Activated CD4-positive, alpha-beta T cell treated with anti-CD3 and anti-CD28 coated beads for 36 hours (primary cell): ENCODE measurements at regions of chr11 and their contacts with region 1.

Region 1: DNA sequence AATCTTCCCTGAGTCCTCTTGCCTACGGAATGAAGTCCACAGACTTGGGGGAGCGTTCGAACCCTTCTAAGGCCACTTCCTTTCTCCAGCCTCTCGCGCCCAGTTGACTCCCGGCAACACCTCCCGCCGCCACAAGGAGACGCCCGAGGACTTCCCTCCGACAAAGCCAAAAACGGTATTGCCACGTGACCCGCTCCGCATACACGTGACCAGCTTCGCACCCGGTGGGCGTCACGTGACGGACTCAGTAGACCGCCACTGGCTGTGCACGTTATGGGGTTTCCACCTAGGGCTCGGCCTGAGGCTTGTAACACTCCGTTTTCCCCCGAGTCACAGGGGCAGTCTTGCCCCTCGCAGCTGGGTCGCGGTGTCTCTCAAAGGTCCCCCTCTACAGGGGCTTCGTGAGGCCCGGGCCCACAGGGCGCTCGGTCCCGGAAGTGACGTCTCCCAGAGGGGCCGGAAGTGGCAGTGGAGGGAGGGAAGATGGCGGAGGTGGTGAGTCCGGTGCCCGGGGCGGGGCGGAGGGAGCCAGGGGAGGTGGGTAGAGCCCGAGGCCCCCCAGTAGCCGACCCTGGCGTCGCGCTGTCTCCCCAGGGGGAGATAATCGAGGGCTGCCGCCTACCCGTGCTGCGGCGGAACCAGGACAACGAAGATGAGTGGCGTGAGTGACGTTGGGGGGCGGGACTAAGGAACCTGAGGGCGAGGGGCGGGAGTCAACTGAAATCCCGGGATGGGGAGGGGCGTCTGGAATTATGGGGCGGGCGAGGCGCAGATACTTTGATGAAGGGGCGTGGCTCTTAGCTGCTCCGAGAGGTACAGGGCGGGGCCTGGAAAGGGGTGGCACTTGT is at the start of gene KAT5:
- DNase-seq: peak; percentile 99
- ATAC-seq: peak; percentile 86
- H3K4me3 Mint-ChIP-seq: peak within 1 kb of the TSS; percentile 90
- H3K27ac Mint-ChIP-seq: peak within 1 kb of the TSS; percentile 96
- H3K4me1 Mint-ChIP-seq: peaks cover 27% of the 10 kb centered on the region
- H3K27me3 Mint-ChIP-seq: no peaks in the 10 kb centered on the region
- total RNA-seq, gene KAT5: 56.5 to 65.1 TPM

Region 2: GRCh38 chr11:65652511-65653231 is 59.3 kb before region 1 on chr11:
- CTCF ChIA-PET with region 1: interaction called, 3 read pairs
- POLR2A ChIA-PET with region 1: no interaction called
- intact Hi-C with region 1: loop called in 1 of 2 experiments (anchors 1 kb)
- DNase-seq: peak; percentile 98
- ATAC-seq: peak; percentile 89
- H3K4me3 Mint-ChIP-seq: peak overlapping the region; percentile 79
- H3K27ac Mint-ChIP-seq: peak overlapping the region; percentile 95
- H3K4me1 Mint-ChIP-seq: peaks cover 45% of the 10 kb centered on the region
- H3K27me3 Mint-ChIP-seq: no peaks in the 10 kb centered on the region

Region 3: DNA sequence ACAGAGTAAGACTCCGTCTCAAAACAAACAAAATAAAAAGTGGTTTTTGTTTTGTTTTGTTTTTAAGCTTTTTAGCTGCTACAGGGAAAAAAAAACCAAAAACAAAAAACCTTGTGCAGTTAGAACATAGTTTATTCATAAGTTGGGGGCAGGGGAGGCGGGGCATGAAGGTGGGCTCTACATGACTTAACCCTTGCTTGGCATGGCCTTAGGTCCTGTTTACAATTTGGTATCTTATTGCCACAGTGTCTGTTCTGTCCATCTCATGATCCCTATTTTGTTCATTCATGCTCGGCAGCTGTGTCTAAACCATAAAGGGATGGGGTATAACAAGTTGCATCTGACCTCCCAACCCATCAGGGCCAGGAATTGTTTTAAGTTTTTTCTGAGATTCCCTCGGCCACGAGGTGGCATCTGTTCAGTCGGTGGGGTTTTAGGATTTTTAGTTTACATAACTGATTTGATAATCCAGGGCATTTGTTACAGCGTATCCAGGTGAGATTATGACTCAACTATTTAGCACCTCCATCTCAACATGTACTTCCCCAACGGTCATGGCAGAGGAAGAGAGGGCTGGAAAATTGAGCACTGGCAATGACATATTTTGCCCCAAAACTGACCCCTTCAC is 61.9 kb after region 1 on chr11:
- CTCF ChIA-PET with region 1: interaction called, 31 read pairs
- POLR2A ChIA-PET with region 1: interaction called, 3 read pairs
- intact Hi-C with region 1: loop called (anchors 1 to 2 kb)
- DNase-seq: no peak
- ATAC-seq: peak; percentile 23
- H3K4me3 Mint-ChIP-seq: no peak overlapping the region
- H3K27ac Mint-ChIP-seq: peak overlapping the region; percentile 15
- H3K4me1 Mint-ChIP-seq: peaks cover 26% of the 10 kb centered on the region
- H3K27me3 Mint-ChIP-seq: no peaks in the 10 kb centered on the region

Region 4: DNA sequence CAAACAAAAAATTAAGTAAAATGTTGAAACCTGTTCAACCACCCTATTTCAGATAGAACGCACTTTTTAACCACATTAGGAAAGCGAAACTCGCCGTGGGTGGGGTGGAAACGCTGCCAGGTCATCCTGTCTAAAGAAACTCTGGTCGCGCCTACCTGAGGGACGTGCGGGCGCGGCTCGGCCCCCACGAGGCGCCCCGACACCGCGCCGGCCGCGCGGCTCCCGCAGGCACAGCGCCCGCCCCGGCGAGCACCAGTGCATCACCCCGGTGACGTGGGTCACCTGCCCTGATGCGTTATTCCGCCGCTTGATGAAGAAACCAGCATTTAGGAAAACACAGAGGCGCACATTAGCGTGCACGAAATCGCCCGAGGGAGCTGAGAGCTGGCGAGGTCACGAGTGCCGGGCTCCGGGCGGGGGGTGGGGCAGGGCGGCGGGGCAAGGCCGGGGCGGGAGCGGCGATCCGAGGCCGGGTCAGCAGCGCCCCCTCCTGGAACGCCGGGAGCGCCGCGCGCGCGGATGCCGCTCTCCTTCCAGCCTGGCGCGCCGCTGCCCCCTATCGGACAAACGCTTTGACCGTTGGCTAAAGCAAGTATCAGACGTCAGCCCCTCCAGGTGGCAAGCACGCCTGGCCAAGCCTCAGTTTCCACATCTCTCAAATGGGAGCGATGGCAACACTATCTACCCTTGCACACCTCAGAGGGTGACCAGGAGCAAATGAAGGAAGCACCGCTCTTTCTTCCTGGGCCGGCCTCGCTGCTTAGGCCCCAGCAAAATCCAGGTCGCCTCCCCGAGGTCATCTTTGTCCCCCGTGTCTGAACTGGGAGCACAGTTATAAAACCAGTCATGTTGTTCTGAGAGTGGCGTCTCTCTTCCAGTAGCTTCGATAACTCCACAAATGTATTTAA is 106.1 kb after region 1 on chr11:
- CTCF ChIA-PET with region 1: interaction called, 21 read pairs
- POLR2A ChIA-PET with region 1: no interaction called
- intact Hi-C with region 1: loop called (anchors 1 kb)
- DNase-seq: peak; percentile 98
- ATAC-seq: peak; percentile 91
- H3K4me3 Mint-ChIP-seq: peak overlapping the region; percentile 74
- H3K27ac Mint-ChIP-seq: peak overlapping the region; percentile 87
- H3K4me1 Mint-ChIP-seq: peaks cover 14% of the 10 kb centered on the region
- H3K27me3 Mint-ChIP-seq: no peaks in the 10 kb centered on the region

Region 5: DNA sequence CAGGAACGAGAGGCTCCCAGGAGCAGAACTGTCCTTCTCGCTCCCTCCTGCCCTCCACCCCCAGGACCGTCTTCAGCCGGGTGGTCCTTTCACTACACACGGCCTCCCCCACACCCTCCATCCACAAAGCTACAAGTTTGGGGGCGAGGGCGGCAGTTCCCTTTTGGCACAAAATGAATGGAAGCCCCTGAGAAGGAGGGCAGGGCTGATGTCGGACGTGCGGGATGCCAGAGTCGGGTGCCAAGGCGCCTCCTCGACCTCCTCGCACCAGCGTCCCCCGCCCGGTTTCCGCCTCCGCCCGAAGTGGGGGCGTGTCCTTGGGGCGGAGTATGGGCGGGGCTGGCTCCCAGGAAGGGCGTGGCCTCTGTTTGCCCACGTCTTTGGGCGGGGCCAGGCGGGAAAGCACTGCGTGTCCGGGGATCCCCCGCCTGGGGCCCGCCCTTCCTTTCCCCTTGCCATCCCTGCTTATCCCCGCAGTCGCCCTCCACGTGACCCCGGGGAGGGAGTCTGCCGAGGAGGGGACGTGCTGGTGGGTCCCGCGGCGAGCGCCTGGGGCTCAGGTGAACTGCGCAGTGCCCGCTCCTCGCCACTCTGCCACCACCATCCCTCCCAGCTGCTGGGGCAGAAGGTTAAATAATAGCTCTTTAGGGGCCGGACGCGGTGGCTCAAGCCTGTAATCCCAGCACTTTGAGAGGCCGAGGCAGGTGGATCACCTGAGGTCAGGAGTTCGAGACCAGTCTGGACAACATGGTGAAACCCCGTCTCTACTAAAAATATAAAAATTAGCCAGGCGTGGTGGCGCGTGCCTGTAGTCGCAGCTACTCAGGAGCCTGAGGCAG is 161.5 kb after region 1 on chr11:
- CTCF ChIA-PET with region 1: no interaction called
- POLR2A ChIA-PET with region 1: no interaction called
- intact Hi-C with region 1: loop called in 1 of 2 experiments (anchors 1 kb)
- DNase-seq: peak; percentile 97
- ATAC-seq: peak; percentile 93
- H3K4me3 Mint-ChIP-seq: peak overlapping the region; percentile 84
- H3K27ac Mint-ChIP-seq: peak overlapping the region; percentile 91
- H3K4me1 Mint-ChIP-seq: peaks cover 15% of the 10 kb centered on the region
- H3K27me3 Mint-ChIP-seq: no peaks in the 10 kb centered on the region

Region 6: GRCh38 chr11:65903068-65903481 is 191.1 kb after region 1 on chr11:
- CTCF ChIA-PET with region 1: no interaction called
- POLR2A ChIA-PET with region 1: no interaction called
- intact Hi-C with region 1: no loop called
- DNase-seq: no peak
- ATAC-seq: no peak
- H3K4me3 Mint-ChIP-seq: no peak overlapping the region
- H3K27ac Mint-ChIP-seq: no peak overlapping the region
- H3K4me1 Mint-ChIP-seq: peaks cover 11% of the 10 kb centered on the region
- H3K27me3 Mint-ChIP-seq: peaks cover 4% of the 10 kb centered on the region

Region 7: GRCh38 chr11:65961232-65961901 is 249.4 kb after region 1 on chr11 and contains the start of gene SART1:
- CTCF ChIA-PET with region 1: interaction called, 4 read pairs
- POLR2A ChIA-PET with region 1: interaction called, 3 read pairs
- intact Hi-C with region 1: loop called in 1 of 2 experiments (anchors 1 kb)
- DNase-seq: peak; percentile 98
- ATAC-seq: peak; percentile 91
- H3K4me3 Mint-ChIP-seq: peak within 1 kb of the TSS; percentile 92
- H3K27ac Mint-ChIP-seq: peak within 1 kb of the TSS; percentile 97
- H3K4me1 Mint-ChIP-seq: peaks cover 37% of the 10 kb centered on the region
- H3K27me3 Mint-ChIP-seq: no peaks in the 10 kb centered on the region
- total RNA-seq, gene SART1: 54.7 to 84.5 TPM

Region 8: DNA sequence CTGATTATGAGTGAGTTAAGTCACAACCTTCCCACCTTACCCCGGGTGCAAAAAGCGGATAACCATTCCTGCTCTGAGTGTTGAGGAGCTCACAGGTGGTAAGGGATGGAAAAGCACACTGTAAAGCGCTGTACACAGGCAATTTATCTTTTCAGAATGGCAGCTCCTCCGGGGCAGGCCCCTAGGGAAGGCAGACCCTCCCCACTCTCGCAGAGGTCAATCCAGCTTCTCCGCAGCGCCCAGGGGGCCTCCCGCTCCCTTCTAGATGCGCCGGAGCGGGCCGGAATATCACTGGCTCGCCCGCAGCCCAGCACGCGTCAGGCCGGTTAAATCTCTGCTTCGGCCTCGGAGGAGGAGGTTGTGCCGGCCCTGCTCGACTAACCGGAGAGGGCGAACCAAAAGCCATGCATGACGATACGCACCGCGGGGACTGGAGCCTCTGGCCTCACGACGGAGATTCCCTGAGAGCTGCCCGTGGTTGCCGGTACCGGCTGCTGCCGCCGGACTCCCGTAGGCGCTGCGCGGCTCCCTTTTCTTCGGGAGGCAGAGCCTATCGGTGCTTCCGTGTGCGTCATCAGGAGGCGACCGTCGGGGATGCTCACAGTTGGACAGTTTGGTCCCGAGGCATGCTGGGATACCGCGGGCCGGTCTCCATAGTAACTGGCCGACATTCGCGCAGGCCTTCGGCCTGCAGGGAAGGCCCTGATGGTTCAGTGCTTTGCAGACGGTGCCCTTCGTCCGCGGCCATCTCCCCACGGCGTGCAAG is 632.7 kb after region 1 on chr11 and contains the start of gene BRMS1:
- CTCF ChIA-PET with region 1: no interaction called
- POLR2A ChIA-PET with region 1: no interaction called
- intact Hi-C with region 1: loop called in 1 of 2 experiments (anchors 2 kb)
- DNase-seq: peak; percentile 98
- ATAC-seq: peak; percentile 80
- H3K4me3 Mint-ChIP-seq: peak within 1 kb of the TSS; percentile 93
- H3K27ac Mint-ChIP-seq: peak within 1 kb of the TSS; percentile 90
- H3K4me1 Mint-ChIP-seq: peaks cover 45% of the 10 kb centered on the region
- H3K27me3 Mint-ChIP-seq: peaks cover 3% of the 10 kb centered on the region
- total RNA-seq, gene BRMS1: 29.2 to 30.2 TPM